CD8-positive, alpha-beta memory T cell (primary cell): ENCODE measurements at regions of chr13 and their contacts with region 1.

Region 1: GRCh38 chr13:44474122-44474909 is 100.7 kb downstream of the SERP2 start:
- DNase-seq: no peak
- H3K4me3 ChIP-seq: no peak overlapping the region
- H3K4me3 Mint-ChIP-seq: no peak overlapping the region
- H3K27ac ChIP-seq: no peak overlapping the region
- H3K27ac Mint-ChIP-seq: peak overlapping the region in 1 of 8 donors; percentile 47
- H3K4me1 ChIP-seq: no peaks in the 10 kb centered on the region
- H3K4me1 Mint-ChIP-seq: no peaks in the 10 kb centered on the region
- H3K27me3 ChIP-seq: no peaks in the 10 kb centered on the region
- H3K27me3 Mint-ChIP-seq: no peaks in the 10 kb centered on the region

Region 2: DNA sequence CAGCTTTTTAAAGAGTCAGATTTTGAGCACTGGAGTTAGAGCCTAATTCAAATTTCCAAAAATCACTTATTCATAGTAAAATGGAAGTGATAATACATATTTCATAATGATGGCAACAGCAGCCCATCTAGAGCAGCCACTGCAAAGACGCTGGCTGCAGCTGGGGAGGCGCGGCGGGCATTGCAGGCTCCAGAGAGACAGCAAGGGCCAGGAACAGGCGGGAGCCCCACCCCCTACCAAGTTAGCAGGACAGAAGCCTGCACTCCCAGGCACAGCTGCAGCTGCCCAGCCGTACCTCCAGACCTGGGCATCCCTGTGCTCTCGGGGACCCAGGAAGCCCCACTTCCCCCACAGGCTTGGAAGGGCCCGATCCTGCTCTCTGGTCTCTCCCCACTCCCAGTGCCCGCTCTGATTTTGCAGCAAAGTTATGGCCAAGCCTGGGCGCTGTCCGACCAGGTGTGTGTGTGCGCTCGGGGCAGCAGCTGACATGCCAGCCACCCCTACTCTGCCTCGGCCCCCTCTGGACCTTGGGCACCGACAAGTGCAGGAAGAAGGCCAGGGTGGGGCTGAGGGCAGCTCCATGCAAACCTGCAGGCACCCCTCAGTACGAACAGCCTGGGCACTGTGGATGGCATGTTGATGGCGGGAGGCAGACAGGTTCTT is 15.9 kb before region 1 on chr13:
- CTCF ChIA-PET with region 1: no interaction called
- POLR2A ChIA-PET with region 1: interaction called, 15 read pairs
- DNase-seq: no peak
- H3K4me3 ChIP-seq: no peak overlapping the region
- H3K4me3 Mint-ChIP-seq: no peak overlapping the region
- H3K27ac ChIP-seq: no peak overlapping the region
- H3K27ac Mint-ChIP-seq: no peak overlapping the region
- H3K4me1 ChIP-seq: no peaks in the 10 kb centered on the region
- H3K4me1 Mint-ChIP-seq: peaks cover 5 to 19% (median 8%) of the 10 kb centered on the region in 3 donors
- H3K27me3 ChIP-seq: no peaks in the 10 kb centered on the region
- H3K27me3 Mint-ChIP-seq: no peaks in the 10 kb centered on the region